Activated CD4-positive, alpha-beta T cell treated with anti-CD3 and anti-CD28 coated beads for 36 hours (primary cell): ENCODE measurements at regions of chr11 and their contacts with region 1.

Region 1: DNA sequence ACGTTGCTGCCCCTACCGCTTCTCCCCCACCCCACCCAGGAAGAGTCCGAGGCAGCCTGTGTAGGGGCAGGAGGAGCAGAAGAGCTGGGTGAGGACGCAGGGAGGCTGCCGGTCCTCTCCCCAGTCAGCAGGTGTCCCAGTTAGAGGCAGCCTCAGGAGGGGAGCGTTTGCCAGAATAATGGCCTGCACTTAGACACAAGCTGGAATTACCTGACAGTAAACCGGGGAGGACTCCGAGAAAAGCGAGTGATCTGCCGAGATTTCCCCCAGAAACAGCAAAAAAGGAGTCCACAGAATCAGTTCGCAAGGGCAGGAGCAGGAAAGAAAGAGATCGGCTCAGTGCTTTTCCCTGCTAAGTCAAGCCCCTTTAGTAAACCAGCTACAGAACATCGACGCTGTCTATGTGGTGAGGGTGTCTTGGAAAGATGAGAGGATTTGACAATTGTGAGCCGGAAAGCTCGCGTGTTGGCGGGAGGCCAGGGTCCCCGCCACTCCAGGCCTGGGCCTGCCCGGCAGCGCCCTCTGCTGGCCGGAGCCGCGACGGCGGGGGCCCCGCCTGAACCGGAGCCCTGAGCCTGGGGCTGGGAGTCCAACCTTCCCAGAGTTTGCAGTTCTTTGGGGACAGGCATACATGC is 17.7 kb upstream of the THRSP start:
- DNase-seq: peak; percentile 87
- ATAC-seq: peak; percentile 98
- H3K4me3 Mint-ChIP-seq: no peak overlapping the region
- H3K27ac Mint-ChIP-seq: peak overlapping the region; percentile 47
- H3K4me1 Mint-ChIP-seq: peaks cover 10% of the 10 kb centered on the region
- H3K27me3 Mint-ChIP-seq: no peaks in the 10 kb centered on the region

Region 2: DNA sequence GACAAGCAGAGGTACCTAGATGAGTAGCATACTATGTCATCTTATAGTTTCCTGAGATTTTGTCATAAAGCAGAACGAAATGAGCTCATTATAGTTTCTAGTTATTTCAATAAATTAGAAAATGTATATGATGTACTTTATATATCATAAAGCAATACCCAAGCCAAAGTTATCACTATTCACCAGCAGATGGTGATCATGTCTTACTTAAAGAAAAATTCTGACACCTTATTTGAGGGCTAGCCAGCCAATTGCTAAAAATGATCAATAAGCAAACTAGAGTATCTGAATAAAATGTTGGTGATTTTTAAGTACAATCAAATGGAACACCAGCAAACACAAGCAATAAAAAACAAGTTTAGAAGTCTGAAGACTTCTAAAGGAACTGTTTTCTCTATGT is 269.5 kb before region 1 on chr11:
- CTCF ChIA-PET with region 1: interaction called, 6 read pairs
- POLR2A ChIA-PET with region 1: no interaction called
- intact Hi-C with region 1: loop called in 1 of 2 experiments (anchors 1 kb)
- DNase-seq: no peak
- ATAC-seq: peak; percentile 39
- H3K4me3 Mint-ChIP-seq: no peak overlapping the region
- H3K27ac Mint-ChIP-seq: no peak overlapping the region
- H3K4me1 Mint-ChIP-seq: peaks cover 51% of the 10 kb centered on the region
- H3K27me3 Mint-ChIP-seq: no peaks in the 10 kb centered on the region

Region 3: DNA sequence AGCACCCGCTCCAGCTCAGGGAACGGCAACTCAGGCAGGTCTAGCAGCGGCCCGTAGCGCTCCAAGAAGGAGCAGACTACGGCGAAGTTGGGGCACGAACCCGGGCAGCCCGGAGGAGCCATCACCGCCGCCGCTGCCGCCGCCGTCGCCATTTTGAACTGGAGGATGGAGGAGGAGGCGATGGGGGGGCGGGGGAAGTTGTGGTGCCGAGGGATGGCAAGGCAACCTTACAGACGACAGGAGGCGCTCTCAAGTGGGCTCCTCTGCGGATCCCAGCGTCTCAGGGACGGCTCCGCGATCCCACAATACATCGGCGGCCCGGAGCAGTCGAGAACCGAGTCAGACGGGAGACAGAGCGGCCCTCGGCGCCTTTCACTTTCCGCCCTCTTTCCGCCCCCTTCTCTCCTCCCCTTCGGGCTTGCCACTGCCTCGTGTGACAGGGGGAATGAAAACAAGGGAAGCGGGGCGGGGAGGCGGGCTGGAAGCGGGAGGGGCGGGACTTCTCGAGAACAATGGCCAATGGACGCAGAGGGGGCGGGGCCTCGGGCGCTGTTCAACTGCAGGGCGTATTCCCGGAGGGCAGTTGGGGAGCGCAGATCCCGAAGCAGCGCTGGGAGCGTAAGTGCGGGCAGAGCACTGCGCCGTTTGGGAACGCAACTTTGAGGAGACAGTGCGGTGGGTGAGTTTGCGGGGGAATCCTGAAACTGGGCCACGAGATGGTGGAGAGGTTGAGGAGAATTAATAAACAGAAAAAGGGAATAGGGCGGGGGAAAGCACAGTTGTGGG is 225.2 kb before region 1 on chr11 and contains the starts of genes AAMDC and RSF1:
- CTCF ChIA-PET with region 1: interaction called, 5 read pairs
- POLR2A ChIA-PET with region 1: no interaction called
- intact Hi-C with region 1: loop called in 1 of 2 experiments (anchors 5 kb)
- DNase-seq: peak; percentile 99
- ATAC-seq: peak; percentile 88
- H3K4me3 Mint-ChIP-seq: peak within 1 kb of the TSS; percentile 97
- H3K27ac Mint-ChIP-seq: peak within 1 kb of the TSS; percentile 98
- H3K4me1 Mint-ChIP-seq: peaks cover 35% of the 10 kb centered on the region
- H3K27me3 Mint-ChIP-seq: no peaks in the 10 kb centered on the region
- total RNA-seq, gene AAMDC: 4.8 to 5.3 TPM
- total RNA-seq, gene RSF1: 49.9 to 59.2 TPM

Region 4: GRCh38 chr11:78011301-78011700 is 34.7 kb before region 1 on chr11:
- CTCF ChIA-PET with region 1: interaction called, 11 read pairs
- POLR2A ChIA-PET with region 1: no interaction called
- intact Hi-C with region 1: loop called in 1 of 2 experiments (anchors 5 kb)
- DNase-seq: no peak
- ATAC-seq: no peak
- H3K4me3 Mint-ChIP-seq: no peak overlapping the region
- H3K27ac Mint-ChIP-seq: no peak overlapping the region
- H3K4me1 Mint-ChIP-seq: no peaks in the 10 kb centered on the region
- H3K27me3 Mint-ChIP-seq: peaks cover 2% of the 10 kb centered on the region

Region 5: DNA sequence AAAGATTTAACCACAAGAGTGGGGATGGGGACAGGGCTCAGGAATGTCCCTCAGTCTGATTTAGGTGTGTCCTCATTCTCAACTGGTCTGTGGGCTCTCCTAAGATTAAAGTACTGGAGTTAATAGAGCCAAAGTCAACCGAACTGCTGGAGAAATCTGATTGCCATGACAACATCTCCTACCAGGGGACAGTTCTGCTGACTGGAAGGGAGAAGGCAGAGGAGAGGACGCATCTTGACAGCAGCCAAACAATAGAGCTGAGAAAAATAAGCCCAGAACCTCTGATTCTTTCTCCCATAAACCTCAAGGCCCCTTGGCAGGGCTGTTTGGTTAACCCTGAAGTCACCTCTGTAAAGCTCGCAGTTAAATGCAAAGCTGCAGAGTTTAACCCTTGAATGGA is 25.7 kb before region 1 on chr11:
- CTCF ChIA-PET with region 1: interaction called, 17 read pairs
- POLR2A ChIA-PET with region 1: no interaction called
- intact Hi-C with region 1: no loop called
- DNase-seq: no peak
- ATAC-seq: no peak
- H3K4me3 Mint-ChIP-seq: no peak overlapping the region
- H3K27ac Mint-ChIP-seq: no peak overlapping the region
- H3K4me1 Mint-ChIP-seq: no peaks in the 10 kb centered on the region
- H3K27me3 Mint-ChIP-seq: peaks cover 16% of the 10 kb centered on the region

Region 6: DNA sequence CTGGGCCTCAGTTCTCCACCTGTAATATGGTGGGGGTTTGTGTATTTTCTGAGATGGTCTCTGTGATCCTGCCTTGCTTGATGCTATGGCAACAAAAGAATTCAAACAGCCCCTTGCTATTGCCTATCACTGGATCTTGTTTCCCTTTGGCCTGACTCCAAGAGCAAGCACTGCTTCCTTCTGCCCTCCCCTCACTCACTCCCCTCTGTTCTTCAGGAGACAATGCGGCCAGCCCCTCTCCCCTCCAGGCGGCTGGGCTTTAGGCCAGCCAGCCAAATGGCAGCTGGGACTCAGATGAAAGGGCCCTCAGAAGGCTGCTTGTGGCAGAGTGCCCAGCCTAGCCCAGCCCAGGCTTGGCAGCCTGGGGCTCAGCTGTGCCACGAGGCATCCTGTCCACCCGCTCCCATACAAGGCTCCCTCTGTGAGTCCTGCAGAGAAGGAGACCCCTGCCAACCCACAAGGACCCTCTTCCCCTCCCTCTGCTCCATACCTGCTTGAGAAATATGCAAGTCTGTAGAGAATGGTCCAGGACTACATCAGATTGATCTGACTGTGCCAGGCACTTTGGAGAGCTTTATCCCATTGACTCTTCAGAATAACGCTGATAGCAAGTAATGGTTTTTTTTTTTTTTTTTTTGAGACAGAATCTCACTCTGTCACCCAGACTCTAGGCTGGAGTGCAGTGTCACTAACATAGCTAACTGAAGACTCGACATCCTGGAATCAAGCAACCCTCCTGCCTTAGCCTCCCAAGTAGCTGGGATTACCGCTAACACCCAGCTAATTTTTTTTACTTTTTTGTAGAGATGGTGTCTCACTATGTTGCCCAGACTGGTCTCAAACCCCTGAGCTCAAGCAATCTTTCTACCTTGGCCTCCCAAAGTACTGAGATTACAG is 15.3 kb before region 1 on chr11:
- CTCF ChIA-PET with region 1: interaction called, 15 read pairs
- POLR2A ChIA-PET with region 1: no interaction called
- intact Hi-C with region 1: no loop called
- DNase-seq: no peak
- ATAC-seq: no peak
- H3K4me3 Mint-ChIP-seq: no peak overlapping the region
- H3K27ac Mint-ChIP-seq: no peak overlapping the region
- H3K4me1 Mint-ChIP-seq: no peaks in the 10 kb centered on the region
- H3K27me3 Mint-ChIP-seq: no peaks in the 10 kb centered on the region

Region 7: DNA sequence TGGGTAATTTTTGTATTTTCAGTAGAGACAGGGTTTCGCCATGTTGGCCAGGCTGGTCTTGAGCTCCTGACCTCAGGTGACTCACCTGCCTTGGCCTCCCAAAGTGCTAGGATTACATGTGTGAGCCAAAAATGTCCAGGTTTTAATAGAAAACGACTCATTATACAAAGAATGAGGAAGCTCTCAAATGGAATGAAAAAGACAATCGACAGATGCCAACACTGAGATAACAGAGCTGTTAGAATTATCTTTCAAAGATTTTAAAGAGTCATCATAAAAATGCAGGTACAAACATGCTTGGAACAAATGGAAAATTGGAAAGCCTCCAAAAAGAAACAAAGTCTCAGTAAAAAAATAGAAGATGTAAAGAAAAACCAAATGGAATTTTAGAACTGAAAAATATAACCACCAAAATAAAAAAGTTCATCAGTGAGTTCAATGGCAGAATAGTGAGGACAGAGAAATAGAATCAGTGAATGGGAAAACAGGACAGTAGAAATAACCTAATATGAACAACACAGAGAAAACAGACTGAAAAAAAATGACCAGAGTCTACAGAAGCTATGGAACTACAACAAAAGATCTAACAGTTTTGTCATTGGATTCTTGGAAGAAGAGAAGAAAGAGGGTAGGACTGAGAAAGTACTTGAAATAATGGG is 360.7 kb after region 1 on chr11:
- CTCF ChIA-PET with region 1: no interaction called
- POLR2A ChIA-PET with region 1: no interaction called
- intact Hi-C with region 1: no loop called
- DNase-seq: no peak
- ATAC-seq: no peak
- H3K4me3 Mint-ChIP-seq: no peak overlapping the region
- H3K27ac Mint-ChIP-seq: no peak overlapping the region
- H3K4me1 Mint-ChIP-seq: no peaks in the 10 kb centered on the region
- H3K27me3 Mint-ChIP-seq: peaks cover 2% of the 10 kb centered on the region